ENCODE measurements at regions of chr10 and their contacts with region 1.

Region 1: GRCh38 chr10:7787857-7788638 is at the starts of genes ATP5F1C and KIN:
- DNase-seq: peak; percentile 91
- H3K4me3 ChIP-seq: peak within 1 kb of the TSS; percentile 98
- H3K27ac ChIP-seq: peak within 1 kb of the TSS; percentile 47
- H3K27me3 ChIP-seq: no peaks in the 10 kb centered on the region
- CTCF ChIP-seq: no peak
- polyA plus RNA-seq, gene ATP5F1C: 378 and 456 TPM in 2 replicates
- polyA plus RNA-seq, gene KIN: 10.2 and 16.0 TPM in 2 replicates

Region 2: DNA sequence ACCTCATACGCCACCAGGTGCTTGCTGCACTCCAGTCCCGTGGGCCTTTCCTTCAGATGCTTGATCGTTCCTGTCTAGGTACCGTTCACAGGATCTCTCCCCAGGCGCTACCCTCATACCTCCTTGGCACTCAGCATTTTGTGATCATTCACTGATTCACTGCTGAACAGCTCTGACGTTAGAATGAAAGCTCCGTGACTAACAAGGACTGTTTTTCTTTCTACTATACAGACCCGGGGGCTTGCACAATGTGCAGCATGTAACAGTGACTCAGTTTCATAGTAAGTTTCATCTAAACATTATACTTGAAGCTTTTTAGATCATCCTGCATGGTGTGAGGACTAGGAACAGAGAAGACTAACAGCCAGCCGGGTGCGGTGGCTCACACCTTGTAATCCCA is 20.8 kb before region 1 on chr10:
- CTCF ChIA-PET with region 1: no interaction called
- POLR2A ChIA-PET with region 1: interaction called, 13 read pairs
- DNase-seq: peak; percentile 78
- H3K4me3 ChIP-seq: no peak overlapping the region
- H3K27ac ChIP-seq: peak overlapping the region; percentile 59
- H3K27me3 ChIP-seq: no peaks in the 10 kb centered on the region
- CTCF ChIP-seq: no peak

Region 3: DNA sequence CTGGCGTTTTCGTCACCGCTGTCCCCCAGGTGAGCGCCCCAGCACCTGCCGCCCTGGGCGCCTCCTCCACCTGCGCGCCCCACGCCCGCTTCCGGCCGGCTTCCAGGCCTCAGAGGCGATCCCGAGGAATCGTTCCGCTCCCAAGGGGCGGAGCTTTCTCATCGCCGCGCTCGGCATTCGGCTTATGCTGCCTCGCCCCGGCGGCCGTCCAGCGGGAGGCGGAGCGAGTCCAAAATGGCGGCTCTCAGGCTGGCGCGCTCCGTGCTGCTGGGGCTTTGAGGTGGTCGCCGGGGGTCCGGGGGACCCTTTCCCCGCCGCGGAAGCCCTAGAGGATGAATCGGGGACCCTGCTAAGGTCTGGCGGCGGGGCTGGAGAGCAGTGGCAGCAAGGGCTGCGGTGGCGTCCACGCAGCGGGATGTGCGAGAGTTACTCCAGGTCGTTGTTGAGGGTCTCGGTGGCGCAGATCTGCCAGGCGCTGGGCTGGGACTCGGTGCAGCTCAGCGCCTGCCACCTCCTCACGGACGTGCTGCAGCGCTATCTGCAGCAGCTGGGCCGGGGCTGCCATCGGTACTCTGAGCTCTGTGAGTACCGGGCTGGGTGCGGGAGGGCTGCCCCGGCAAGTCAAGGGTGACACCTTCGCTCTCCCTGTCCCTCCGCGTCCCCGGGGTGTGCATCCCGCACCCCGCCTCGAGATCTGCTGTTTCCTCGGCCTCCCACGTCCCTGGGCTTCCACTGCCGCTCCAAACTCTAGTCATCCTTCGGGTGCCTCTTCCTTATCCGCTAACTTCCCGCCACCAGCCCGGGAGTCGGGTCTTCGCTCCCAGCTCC is 30.5 kb after region 1 on chr10 and contains the start of gene TAF3:
- CTCF ChIA-PET with region 1: no interaction called
- POLR2A ChIA-PET with region 1: interaction called, 13 read pairs
- DNase-seq: peak; percentile 44
- H3K4me3 ChIP-seq: peak within 1 kb of the TSS; percentile 99
- H3K27ac ChIP-seq: no peak within 1 kb of the TSS
- H3K27me3 ChIP-seq: peaks cover 11% of the 10 kb centered on the region
- CTCF ChIP-seq: no peak
- polyA plus RNA-seq, gene TAF3: 2.3 and 3.1 TPM in 2 replicates

Region 4: GRCh38 chr10:8065651-8066050 is 277.6 kb after region 1 on chr10:
- CTCF ChIA-PET with region 1: no interaction called
- POLR2A ChIA-PET with region 1: no interaction called
- DNase-seq: no peak
- H3K4me3 ChIP-seq: no peak overlapping the region
- H3K27ac ChIP-seq: no peak overlapping the region
- H3K27me3 ChIP-seq: peaks cover 26% of the 10 kb centered on the region
- CTCF ChIP-seq: no peak